Activated B cell treated with CpG ODN at 0.5 μM for 24 hours (primary cell): ENCODE measurements at regions of chr17 and their contacts with region 1.

Region 1: DNA sequence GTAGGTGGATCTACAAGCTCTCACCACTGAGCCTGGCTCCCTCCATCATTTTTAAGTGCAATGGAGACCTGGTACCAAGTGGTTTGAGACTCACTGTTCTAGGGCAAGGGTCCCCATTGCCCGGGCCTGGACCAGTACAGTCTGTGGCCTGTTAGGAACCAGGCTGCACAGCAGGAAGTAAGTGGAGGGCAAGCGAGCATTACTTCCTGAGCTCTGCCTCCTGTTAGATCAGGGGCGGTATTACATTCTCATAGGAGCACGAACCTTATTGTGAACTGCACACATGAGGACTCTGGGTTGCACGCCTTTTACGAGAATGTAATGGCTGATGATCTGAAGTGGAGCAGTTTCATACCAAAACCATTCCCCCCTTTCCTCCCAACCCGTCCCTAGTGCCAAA is 6.8 kb upstream of the ZNF594 start:
- DNase-seq: no peak
- ATAC-seq: peak; percentile 74
- H3K4me3 Mint-ChIP-seq: peak overlapping the region; percentile 41
- H3K27ac Mint-ChIP-seq: peak overlapping the region; percentile 82
- H3K4me1 Mint-ChIP-seq: peaks cover 54% of the 10 kb centered on the region
- H3K27me3 Mint-ChIP-seq: no peaks in the 10 kb centered on the region
- CTCF ChIP-seq: no peak

Region 2: DNA sequence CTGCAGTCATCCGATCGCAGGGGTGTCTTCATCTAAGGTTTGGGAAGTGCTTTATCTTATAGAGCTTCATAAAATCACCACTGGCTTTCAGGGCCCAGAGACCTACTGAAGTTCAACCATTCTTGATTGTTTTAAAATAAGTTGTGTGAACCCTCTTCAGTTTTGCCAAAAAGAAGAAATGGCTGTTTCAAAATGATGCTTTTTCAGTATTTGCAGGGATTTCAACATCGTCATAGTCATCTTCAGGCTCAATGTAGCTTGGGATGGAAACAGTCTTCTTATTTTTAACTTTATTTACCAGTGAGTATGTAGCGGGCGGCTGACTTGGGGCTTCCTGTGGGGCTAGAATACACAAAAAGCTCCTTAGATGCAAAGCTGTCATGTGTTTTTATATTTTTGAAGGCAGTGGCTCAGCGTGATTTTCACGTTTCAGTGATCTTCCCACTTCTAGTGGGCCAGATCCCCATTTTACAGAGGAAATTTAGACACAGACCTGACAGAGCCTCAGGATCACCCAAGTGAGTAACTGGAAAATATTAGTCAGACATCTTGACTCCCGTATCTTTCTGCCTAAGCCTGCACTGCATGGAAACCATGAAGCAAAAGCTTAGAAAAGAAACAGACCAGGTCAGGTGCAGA is 12.3 kb after region 1 on chr17:
- CTCF ChIA-PET with region 1: interaction called, 3 read pairs
- POLR2A ChIA-PET with region 1: interaction called, 14 read pairs
- intact Hi-C with region 1: loop called (anchors 1 kb)
- DNase-seq: no peak
- ATAC-seq: peak; percentile 74
- H3K4me3 Mint-ChIP-seq: peak overlapping the region; percentile 68
- H3K27ac Mint-ChIP-seq: peak overlapping the region; percentile 96
- H3K4me1 Mint-ChIP-seq: peaks cover 78% of the 10 kb centered on the region
- H3K27me3 Mint-ChIP-seq: no peaks in the 10 kb centered on the region
- CTCF ChIP-seq: no peak

Region 3: GRCh38 chr17:5219551-5219950 is 21.1 kb after region 1 on chr17:
- CTCF ChIA-PET with region 1: interaction called, 35 read pairs
- POLR2A ChIA-PET with region 1: interaction called, 46 read pairs
- intact Hi-C with region 1: no loop called
- DNase-seq: no peak
- ATAC-seq: no peak
- H3K4me3 Mint-ChIP-seq: no peak overlapping the region
- H3K27ac Mint-ChIP-seq: peak overlapping the region; percentile 98
- H3K4me1 Mint-ChIP-seq: peaks cover 63% of the 10 kb centered on the region
- H3K27me3 Mint-ChIP-seq: no peaks in the 10 kb centered on the region
- CTCF ChIP-seq: no peak

Region 4: GRCh38 chr17:5226940-5227878 is 28.7 kb after region 1 on chr17:
- CTCF ChIA-PET with region 1: interaction called, 35 read pairs
- POLR2A ChIA-PET with region 1: interaction called, 46 read pairs
- intact Hi-C with region 1: no loop called
- DNase-seq: no peak
- ATAC-seq: peak; percentile 56
- H3K4me3 Mint-ChIP-seq: peak overlapping the region; percentile 75
- H3K27ac Mint-ChIP-seq: peak overlapping the region; percentile 98
- H3K4me1 Mint-ChIP-seq: peaks cover 100% of the 10 kb centered on the region
- H3K27me3 Mint-ChIP-seq: no peaks in the 10 kb centered on the region
- CTCF ChIP-seq: no peak

Region 5: GRCh38 chr17:5254903-5255526 is 56.5 kb after region 1 on chr17:
- CTCF ChIA-PET with region 1: interaction called, 11 read pairs
- POLR2A ChIA-PET with region 1: interaction called, 4 read pairs
- intact Hi-C with region 1: no loop called
- DNase-seq: no peak
- ATAC-seq: peak; percentile 89
- H3K4me3 Mint-ChIP-seq: peak overlapping the region; percentile 78
- H3K27ac Mint-ChIP-seq: peak overlapping the region; percentile 93
- H3K4me1 Mint-ChIP-seq: peaks cover 70% of the 10 kb centered on the region
- H3K27me3 Mint-ChIP-seq: no peaks in the 10 kb centered on the region
- CTCF ChIP-seq: no peak

Region 6: GRCh38 chr17:5304636-5305035 is 106.2 kb after region 1 on chr17:
- CTCF ChIA-PET with region 1: interaction called, 10 read pairs
- POLR2A ChIA-PET with region 1: interaction called, 9 read pairs
- intact Hi-C with region 1: loop called (anchors 1 kb)
- DNase-seq: no peak
- ATAC-seq: no peak
- H3K4me3 Mint-ChIP-seq: no peak overlapping the region
- H3K27ac Mint-ChIP-seq: no peak overlapping the region
- H3K4me1 Mint-ChIP-seq: peaks cover 68% of the 10 kb centered on the region
- H3K27me3 Mint-ChIP-seq: no peaks in the 10 kb centered on the region
- CTCF ChIP-seq: no peak